Activated CD4-positive, alpha-beta T cell treated with anti-CD3 and anti-CD28 coated beads for 36 hours (primary cell): ENCODE measurements at regions of chr3 and their contacts with region 1.

Region 1: DNA sequence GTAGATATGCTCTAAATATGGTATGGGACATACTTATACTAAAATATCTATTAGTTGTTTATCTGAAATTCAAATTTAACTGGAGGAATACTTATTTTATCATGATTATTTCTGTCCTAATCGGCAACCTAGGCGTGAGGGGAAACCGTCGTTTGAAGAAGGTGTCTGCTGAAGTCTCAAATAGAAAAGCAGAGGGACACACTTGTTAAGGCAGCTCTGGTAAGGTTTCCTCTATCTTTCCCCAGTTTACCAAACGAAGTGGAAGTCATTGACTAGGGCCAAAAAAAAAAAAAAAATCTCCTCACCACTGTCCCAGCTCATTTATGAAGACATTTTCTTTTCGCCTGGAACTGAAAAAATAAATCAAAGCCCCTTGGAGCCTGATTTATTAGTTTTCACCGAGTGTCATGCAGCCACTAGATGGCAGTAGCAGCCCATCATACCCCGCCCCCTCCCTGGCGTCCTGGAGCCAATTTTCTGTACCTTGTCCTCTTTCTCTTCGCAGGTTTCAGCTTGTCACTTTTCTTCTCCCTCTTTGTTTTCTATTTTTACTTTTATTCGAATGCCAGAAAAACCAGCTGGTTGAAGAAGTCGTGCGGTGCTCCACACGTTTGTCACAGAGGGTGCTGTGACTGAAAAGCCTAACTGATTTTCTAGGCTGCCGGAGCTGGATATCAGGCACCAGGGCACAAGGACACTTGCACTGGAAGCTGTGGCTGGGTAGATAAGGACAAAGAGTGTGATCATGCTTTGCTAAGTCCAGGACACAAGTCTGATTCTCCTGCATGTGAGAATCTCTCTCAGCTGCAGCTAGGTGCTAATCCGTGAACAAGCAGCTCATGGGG is 238.7 kb downstream of the ZPLD1 start:
- DNase-seq: peak; percentile 80
- ATAC-seq: peak; percentile 33
- H3K4me3 Mint-ChIP-seq: no peak overlapping the region
- H3K27ac Mint-ChIP-seq: no peak overlapping the region
- H3K4me1 Mint-ChIP-seq: no peaks in the 10 kb centered on the region
- H3K27me3 Mint-ChIP-seq: peaks cover 11% of the 10 kb centered on the region

Region 2: GRCh38 chr3:102235679-102236078 is 437.8 kb before region 1 on chr3:
- CTCF ChIA-PET with region 1: no interaction called
- POLR2A ChIA-PET with region 1: no interaction called
- intact Hi-C with region 1: loop called in 1 of 2 experiments (anchors 5 kb)
- DNase-seq: peak; percentile 76
- ATAC-seq: peak; percentile 42
- H3K4me3 Mint-ChIP-seq: no peak overlapping the region
- H3K27ac Mint-ChIP-seq: no peak overlapping the region
- H3K4me1 Mint-ChIP-seq: peaks cover 3% of the 10 kb centered on the region
- H3K27me3 Mint-ChIP-seq: peaks cover 4% of the 10 kb centered on the region

Region 3: DNA sequence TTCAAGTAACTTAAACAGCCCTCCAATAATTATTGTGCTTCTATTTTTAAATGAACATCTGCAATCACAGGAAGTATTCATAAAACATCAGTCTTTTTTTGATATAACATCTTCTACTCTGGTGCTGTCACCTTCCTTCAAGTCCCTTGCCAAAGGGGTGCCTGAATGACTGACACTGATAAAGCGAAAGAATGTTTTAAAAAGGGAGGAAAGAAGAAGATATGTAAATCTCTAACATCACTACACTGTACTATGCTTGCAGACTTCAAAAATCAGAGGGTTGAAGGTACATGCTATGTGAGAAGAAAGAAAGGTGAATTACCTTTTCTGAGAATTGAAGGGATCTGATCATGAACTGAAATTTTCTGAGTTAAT is 15.1 kb after region 1 on chr3:
- CTCF ChIA-PET with region 1: interaction called, 13 read pairs
- POLR2A ChIA-PET with region 1: no interaction called
- intact Hi-C with region 1: no loop called
- DNase-seq: no peak
- ATAC-seq: no peak
- H3K4me3 Mint-ChIP-seq: no peak overlapping the region
- H3K27ac Mint-ChIP-seq: no peak overlapping the region
- H3K4me1 Mint-ChIP-seq: no peaks in the 10 kb centered on the region
- H3K27me3 Mint-ChIP-seq: peaks cover 10% of the 10 kb centered on the region

Region 4: GRCh38 chr3:103515131-103515530 is 841.6 kb after region 1 on chr3:
- CTCF ChIA-PET with region 1: no interaction called
- POLR2A ChIA-PET with region 1: no interaction called
- intact Hi-C with region 1: loop called in 1 of 2 experiments (anchors 10 kb)
- DNase-seq: no peak
- ATAC-seq: no peak
- H3K4me3 Mint-ChIP-seq: no peak overlapping the region
- H3K27ac Mint-ChIP-seq: no peak overlapping the region
- H3K4me1 Mint-ChIP-seq: no peaks in the 10 kb centered on the region
- H3K27me3 Mint-ChIP-seq: no peaks in the 10 kb centered on the region